IMR-90 (cell line): ENCODE measurements at regions of chr5 and their contacts with region 1.

Region 1: DNA sequence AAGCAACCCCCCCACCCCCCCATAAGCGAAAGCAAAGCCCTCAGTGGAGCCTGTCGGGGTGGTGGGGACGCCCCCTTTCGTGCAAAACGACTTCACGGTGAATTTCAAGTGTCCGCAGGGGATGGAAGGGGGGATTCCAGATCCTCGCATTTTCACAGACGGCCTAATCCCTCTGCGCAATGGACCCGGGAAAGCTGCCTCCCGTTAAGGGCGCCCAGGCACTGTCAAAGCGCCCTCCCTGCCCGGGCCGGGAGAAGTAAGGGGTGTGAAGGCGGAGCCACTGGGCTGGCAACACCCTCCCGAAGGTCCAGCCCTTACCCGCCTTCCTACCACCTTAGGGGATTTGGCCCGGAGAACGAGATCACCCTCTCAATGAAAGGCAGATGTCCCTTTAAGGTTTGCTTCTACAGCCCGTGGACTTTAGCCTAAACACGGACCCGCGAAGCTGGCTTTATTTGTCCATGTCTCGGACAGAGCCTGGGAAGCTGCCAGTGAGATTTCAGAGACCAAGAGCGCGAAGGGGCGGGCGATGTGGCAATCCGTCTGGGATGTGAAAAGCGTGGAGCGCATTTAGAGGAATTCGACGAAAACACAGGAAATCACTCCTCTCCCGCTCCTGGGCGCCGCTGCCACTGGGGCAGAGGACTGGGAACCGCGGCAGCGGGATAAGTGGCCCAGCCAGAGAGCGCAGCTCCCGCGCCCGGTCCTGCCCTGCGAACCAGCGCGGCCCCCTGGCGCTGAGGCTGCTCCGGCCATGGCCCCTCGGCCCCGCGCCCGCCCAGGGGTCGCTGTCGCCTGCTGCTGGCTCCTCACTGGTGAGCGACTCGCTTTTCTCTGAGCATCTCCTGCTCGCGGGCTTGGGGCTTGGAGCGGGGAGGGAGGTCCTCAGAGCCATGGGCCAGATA is at the starts of genes ITGA1 and PELO:
- DNase-seq: peak; percentile 81
- ATAC-seq: peak; percentile 86
- H3K4me3 ChIP-seq: peak within 1 kb of the TSS; percentile 61
- H3K27ac ChIP-seq: peak within 1 kb of the TSS; percentile 87
- H3K4me1 ChIP-seq: peaks cover 12% of the 10 kb centered on the region
- H3K27me3 ChIP-seq: no peaks in the 10 kb centered on the region
- CTCF ChIP-seq: peak; percentile 43
- POLR2A ChIP-seq: no peak; the same call in none of the 2 replicates
- RAD21 ChIP-seq: peak; percentile 20; the same call in 1 of the 2 replicates
- total RNA-seq, gene ITGA1: 74.4 and 95.2 TPM in 2 replicates
- total RNA-seq, gene PELO: 48.9 and 49.7 TPM in 2 replicates

Region 2: DNA sequence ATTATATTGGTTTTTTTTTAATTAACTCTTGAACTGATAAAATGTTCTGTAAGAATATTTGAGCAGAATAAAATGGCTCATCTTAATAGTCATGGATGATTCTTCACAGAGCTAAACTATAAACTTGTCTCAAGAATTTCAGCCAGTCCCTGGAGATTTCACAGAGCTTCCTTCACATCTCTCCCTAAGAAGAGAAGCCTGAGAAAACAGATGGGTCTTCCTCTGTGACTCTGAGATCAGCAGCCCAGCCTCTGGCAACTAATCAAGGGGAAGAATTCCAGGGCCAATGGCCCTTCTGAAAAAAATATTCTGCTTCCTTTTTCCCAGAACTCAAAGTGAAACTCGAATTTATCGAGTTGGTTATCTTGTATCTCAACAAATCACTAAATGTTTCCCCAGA is 122.3 kb before region 1 on chr5:
- CTCF ChIA-PET with region 1: no interaction called
- POLR2A ChIA-PET with region 1: interaction called, 3 read pairs
- dilution Hi-C with region 1: no loop called
- in situ Hi-C with region 1: no loop called
- intact Hi-C with region 1: loop called (anchors 2 kb)
- DNase-seq: peak; percentile 1
- ATAC-seq: no peak
- H3K4me3 ChIP-seq: no peak overlapping the region
- H3K27ac ChIP-seq: no peak overlapping the region
- H3K4me1 ChIP-seq: no peaks in the 10 kb centered on the region
- H3K27me3 ChIP-seq: peaks cover 2% of the 10 kb centered on the region
- CTCF ChIP-seq: no peak
- POLR2A ChIP-seq: no peak
- RAD21 ChIP-seq: no peak

Region 3: GRCh38 chr5:52693280-52693679 is 94.6 kb before region 1 on chr5:
- CTCF ChIA-PET with region 1: interaction called, 3 read pairs
- POLR2A ChIA-PET with region 1: no interaction called
- dilution Hi-C with region 1: no loop called
- in situ Hi-C with region 1: no loop called
- intact Hi-C with region 1: loop called (anchors 1 kb)
- DNase-seq: peak; percentile 45
- ATAC-seq: peak; percentile 29; the same call in 1 of the 2 replicates
- H3K4me3 ChIP-seq: no peak overlapping the region
- H3K27ac ChIP-seq: no peak overlapping the region
- H3K4me1 ChIP-seq: peaks cover 8% of the 10 kb centered on the region
- H3K27me3 ChIP-seq: no peaks in the 10 kb centered on the region
- CTCF ChIP-seq: peak; percentile 46
- POLR2A ChIP-seq: no peak
- RAD21 ChIP-seq: peak; percentile 45

Region 4: GRCh38 chr5:52748590-52748989 is 39.3 kb before region 1 on chr5:
- CTCF ChIA-PET with region 1: interaction called, 4 read pairs
- POLR2A ChIA-PET with region 1: no interaction called
- dilution Hi-C with region 1: no loop called
- in situ Hi-C with region 1: no loop called
- intact Hi-C with region 1: loop called (anchors 5 kb)
- DNase-seq: no peak
- ATAC-seq: no peak
- H3K4me3 ChIP-seq: no peak overlapping the region
- H3K27ac ChIP-seq: no peak overlapping the region
- H3K4me1 ChIP-seq: peaks cover 13% of the 10 kb centered on the region
- H3K27me3 ChIP-seq: no peaks in the 10 kb centered on the region
- CTCF ChIP-seq: no peak
- POLR2A ChIP-seq: no peak
- RAD21 ChIP-seq: no peak

Region 5: DNA sequence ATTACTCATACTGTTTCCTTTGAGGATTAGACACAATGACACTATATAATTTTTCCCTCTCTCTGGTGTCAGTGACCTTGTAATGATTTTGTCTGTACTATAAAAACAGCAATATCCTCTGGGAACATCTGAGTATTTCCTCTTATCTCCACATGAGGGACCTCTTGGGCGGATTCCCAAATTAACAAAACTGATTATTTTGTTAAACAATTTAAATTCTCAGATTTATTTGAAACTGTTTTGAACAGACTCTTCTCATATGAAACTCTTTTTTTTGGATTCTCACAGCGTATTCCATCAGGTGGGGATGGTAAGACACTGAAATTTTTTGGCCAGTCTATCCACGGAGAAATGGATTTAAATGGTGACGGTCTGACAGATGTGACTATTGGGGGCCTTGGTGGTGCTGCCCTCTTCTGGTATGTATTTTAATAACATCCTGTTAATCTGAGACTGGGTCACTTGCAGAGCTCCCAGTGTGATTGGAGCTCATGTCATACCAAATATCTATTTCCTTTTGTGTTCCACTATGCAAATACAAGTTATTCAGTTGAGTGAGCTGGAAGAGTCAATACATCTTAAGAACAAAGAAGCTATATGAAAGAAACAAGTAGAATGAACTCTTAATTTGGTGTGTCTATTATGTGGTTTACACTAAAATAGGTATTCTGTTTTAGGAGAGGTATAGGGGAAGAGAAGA is 127.5 kb after region 1 on chr5:
- CTCF ChIA-PET with region 1: interaction called, 4 read pairs
- POLR2A ChIA-PET with region 1: no interaction called
- dilution Hi-C with region 1: no loop called
- in situ Hi-C with region 1: no loop called
- intact Hi-C with region 1: loop called (anchors 1 kb)
- DNase-seq: peak; percentile 75
- ATAC-seq: peak; percentile 96
- H3K4me3 ChIP-seq: peak overlapping the region; percentile 10; the same call in 1 of the 2 replicates
- H3K27ac ChIP-seq: no peak overlapping the region
- H3K4me1 ChIP-seq: no peaks in the 10 kb centered on the region; the same call in 1 of the 2 replicates
- H3K27me3 ChIP-seq: no peaks in the 10 kb centered on the region
- CTCF ChIP-seq: peak; percentile 63
- POLR2A ChIP-seq: no peak
- RAD21 ChIP-seq: peak; percentile 70

Region 6: DNA sequence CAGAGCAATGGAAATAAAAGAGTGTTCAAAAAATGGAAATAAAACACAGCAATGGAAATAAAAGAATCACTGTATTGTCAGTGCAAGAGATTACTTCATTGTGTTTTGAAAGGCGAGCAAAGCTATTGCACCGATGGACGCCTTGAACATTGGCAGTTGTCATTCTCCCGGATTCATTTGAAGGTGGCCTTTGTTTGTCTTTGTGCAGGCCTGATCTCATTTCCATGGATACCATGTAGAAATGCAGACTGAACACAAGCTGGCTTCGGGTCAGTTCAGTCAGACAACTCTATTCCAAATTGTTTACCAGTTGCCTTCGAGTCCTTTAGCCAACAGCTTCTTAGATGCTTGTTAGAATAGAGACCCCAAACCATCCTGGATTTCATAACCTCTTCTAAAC is 209.6 kb after region 1 on chr5:
- CTCF ChIA-PET with region 1: no interaction called
- POLR2A ChIA-PET with region 1: interaction called, 35 read pairs
- dilution Hi-C with region 1: no loop called
- in situ Hi-C with region 1: no loop called
- intact Hi-C with region 1: no loop called
- DNase-seq: no peak
- ATAC-seq: no peak
- H3K4me3 ChIP-seq: no peak overlapping the region
- H3K27ac ChIP-seq: peak overlapping the region; percentile 5; the same call in 1 of the 2 replicates
- H3K4me1 ChIP-seq: peaks cover 16% of the 10 kb centered on the region
- H3K27me3 ChIP-seq: no peaks in the 10 kb centered on the region
- CTCF ChIP-seq: no peak
- POLR2A ChIP-seq: no peak
- RAD21 ChIP-seq: no peak